ENCODE measurements at regions of chr10 and their contacts with region 1.

Region 1: DNA sequence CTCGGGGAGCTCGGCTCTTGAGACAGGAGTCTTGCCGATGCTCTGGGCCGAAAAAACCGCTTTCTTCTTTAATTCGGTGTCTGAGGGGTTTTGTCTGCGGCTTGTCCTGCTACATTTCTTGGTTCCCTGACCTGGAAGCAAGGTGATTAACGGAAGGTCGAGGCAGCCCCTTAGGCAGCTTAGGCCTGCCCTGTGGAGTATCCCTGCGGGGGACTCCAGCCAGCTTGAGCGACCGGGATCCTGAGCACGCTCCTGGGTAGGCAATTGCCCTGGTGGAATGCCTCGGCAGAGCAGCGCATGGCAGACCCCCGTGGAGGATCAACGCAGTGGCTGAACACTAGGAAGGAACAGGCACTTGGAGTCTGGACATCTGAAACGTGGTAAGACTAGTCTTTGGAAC is 30.5 kb upstream of the GHITM start:
- DNase-seq: no peak
- ATAC-seq: no peak
- H3K4me3 ChIP-seq: no peak overlapping the region
- H3K27ac ChIP-seq: no peak overlapping the region
- H3K4me1 ChIP-seq: no peaks in the 10 kb centered on the region
- H3K27me3 ChIP-seq: no peaks in the 10 kb centered on the region; the same call in 1 of the 2 replicates
- CTCF ChIP-seq: no peak

Region 2: GRCh38 chr10:84097787-84098353 is 10.9 kb before region 1 on chr10:
- CTCF ChIA-PET with region 1: interaction called, 15 read pairs
- POLR2A ChIA-PET with region 1: no interaction called
- in situ Hi-C with region 1: no loop called
- intact Hi-C with region 1: no loop called
- DNase-seq: no peak
- ATAC-seq: no peak
- H3K4me3 ChIP-seq: no peak overlapping the region
- H3K27ac ChIP-seq: no peak overlapping the region
- H3K4me1 ChIP-seq: no peaks in the 10 kb centered on the region
- H3K27me3 ChIP-seq: no peaks in the 10 kb centered on the region; the same call in 1 of the 2 replicates
- CTCF ChIP-seq: peak; percentile 78; the same call in 1 of the 2 replicates